Activated B cell treated with CpG ODN at 0.5 μM for 24 hours (primary cell): ENCODE measurements at regions of chr1 and their contacts with region 1.

Region 1: DNA sequence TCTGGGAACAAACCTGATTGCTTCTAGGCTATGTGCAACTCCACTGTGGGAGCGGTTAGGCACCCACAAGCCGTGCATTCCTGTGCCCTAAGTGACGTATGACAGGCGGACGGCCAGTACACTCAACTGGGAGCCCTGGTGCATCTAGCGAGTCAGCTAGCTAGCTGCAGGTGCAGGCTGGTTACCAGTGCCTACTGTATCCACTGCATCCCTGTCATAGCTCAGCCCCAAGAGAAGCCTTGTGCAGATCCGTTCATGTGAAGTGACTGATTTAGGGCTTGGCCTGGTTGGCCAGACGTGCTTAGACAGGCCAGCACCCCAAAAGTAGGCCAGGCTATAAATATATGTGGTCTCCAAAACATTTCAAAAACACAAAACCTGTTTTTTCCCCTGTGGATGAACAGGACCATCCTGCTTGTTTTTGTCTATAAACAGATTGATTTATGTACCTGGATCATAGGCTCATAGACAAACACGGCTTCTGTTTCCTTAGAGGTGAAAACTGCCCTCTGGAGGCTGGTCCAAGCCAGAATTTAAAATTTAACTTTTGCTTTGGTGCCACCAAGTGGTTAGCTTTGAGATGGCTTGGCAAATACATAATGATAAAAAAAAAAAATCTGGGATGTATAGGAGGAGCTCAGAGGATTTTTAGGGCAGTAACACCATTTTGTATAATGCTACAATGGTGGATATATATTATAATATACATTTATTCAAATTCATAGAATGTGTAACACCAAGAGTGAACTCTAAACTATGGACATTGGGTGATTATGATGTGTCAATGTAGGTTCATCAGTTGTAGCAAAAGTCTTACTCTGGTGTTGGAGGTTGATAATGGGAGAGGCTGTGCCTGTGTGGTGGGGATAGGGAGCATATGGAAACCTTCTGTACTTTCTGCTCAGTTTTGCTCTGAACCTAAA is 68.5 kb downstream of the GIPC2 start:
- DNase-seq: no peak
- ATAC-seq: peak; percentile 75
- H3K4me3 Mint-ChIP-seq: no peak overlapping the region
- H3K27ac Mint-ChIP-seq: no peak overlapping the region
- H3K4me1 Mint-ChIP-seq: no peaks in the 10 kb centered on the region
- H3K27me3 Mint-ChIP-seq: peaks cover 1% of the 10 kb centered on the region
- CTCF ChIP-seq: peak; percentile 66

Region 2: GRCh38 chr1:77143529-77144121 is 970.7 kb before region 1 on chr1:
- CTCF ChIA-PET with region 1: no interaction called
- POLR2A ChIA-PET with region 1: no interaction called
- intact Hi-C with region 1: loop called (anchors 1 kb)
- DNase-seq: no peak
- ATAC-seq: no peak
- H3K4me3 Mint-ChIP-seq: no peak overlapping the region
- H3K27ac Mint-ChIP-seq: no peak overlapping the region
- H3K4me1 Mint-ChIP-seq: no peaks in the 10 kb centered on the region
- H3K27me3 Mint-ChIP-seq: no peaks in the 10 kb centered on the region
- CTCF ChIP-seq: no peak

Region 3: DNA sequence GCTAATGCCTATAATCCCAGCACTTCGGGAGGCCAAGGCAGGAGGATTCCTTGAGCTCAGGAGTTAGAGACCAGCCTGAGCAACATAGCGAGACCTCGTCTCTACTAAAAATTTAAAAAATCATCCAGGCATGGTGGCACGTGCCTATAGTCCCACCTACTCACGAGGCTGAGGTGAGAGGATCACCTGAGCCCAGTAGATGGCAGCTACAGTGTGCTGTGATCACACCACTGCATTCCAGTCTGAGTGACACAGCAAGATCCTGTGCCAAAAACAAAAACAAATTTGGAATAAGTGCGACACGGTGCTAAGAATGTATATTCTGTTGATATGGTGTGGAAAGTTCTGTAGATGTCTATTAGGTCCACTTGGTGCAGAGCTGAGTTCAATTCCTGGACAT is 369.7 kb before region 1 on chr1:
- CTCF ChIA-PET with region 1: no interaction called
- POLR2A ChIA-PET with region 1: no interaction called
- intact Hi-C with region 1: loop called (anchors 2 kb)
- DNase-seq: no peak
- ATAC-seq: no peak
- H3K4me3 Mint-ChIP-seq: no peak overlapping the region
- H3K27ac Mint-ChIP-seq: no peak overlapping the region
- H3K4me1 Mint-ChIP-seq: peaks cover 19% of the 10 kb centered on the region
- H3K27me3 Mint-ChIP-seq: no peaks in the 10 kb centered on the region
- CTCF ChIP-seq: no peak

Region 4: DNA sequence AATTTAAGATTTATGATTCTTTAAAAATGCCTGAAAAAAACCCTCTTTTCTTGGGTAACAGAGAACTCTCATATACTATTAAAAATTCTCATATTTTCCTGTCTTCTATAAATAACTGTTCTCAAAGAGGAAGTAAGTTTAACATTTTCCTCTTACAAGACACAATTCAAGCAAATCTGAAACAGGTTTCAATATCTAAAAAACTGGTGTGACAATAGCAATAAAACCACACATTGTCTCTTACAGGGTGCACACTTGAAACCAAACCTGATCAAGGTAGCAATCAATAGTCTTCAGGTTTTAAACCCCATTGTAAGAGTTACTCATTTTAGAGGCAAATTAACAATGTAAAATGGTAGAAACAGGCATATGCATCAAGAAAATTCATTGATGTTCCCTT is 163.4 kb before region 1 on chr1:
- CTCF ChIA-PET with region 1: interaction called, 3 read pairs
- POLR2A ChIA-PET with region 1: no interaction called
- intact Hi-C with region 1: loop called (anchors 5 kb)
- DNase-seq: no peak
- ATAC-seq: peak; percentile 52
- H3K4me3 Mint-ChIP-seq: no peak overlapping the region
- H3K27ac Mint-ChIP-seq: peak overlapping the region; percentile 77
- H3K4me1 Mint-ChIP-seq: peaks cover 40% of the 10 kb centered on the region
- H3K27me3 Mint-ChIP-seq: no peaks in the 10 kb centered on the region
- CTCF ChIP-seq: no peak

Region 5: GRCh38 chr1:78081980-78082860 is 32.1 kb before region 1 on chr1:
- CTCF ChIA-PET with region 1: no interaction called
- POLR2A ChIA-PET with region 1: no interaction called
- intact Hi-C with region 1: no loop called
- DNase-seq: no peak
- ATAC-seq: no peak
- H3K4me3 Mint-ChIP-seq: no peak overlapping the region
- H3K27ac Mint-ChIP-seq: no peak overlapping the region
- H3K4me1 Mint-ChIP-seq: peaks cover 15% of the 10 kb centered on the region
- H3K27me3 Mint-ChIP-seq: no peaks in the 10 kb centered on the region
- CTCF ChIP-seq: no peak

Region 6: DNA sequence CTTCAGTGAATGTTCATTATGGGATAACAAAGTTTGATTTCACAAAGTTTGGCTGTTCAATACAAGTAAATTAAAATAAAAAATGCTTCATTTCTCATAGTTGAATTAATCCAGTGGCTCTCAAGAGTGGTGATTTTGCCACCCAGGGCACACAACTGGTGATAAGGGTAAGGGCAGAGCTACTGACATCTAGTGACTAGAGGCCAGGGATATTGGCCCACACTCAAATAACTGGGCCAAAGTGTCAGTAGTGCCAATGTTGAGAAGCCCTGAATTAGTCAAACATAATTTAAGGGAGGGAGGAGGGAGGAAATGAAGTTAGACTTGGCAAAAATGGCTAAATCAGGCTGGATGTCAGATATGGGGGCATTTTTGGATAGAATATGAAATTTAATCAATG is 1772.8 kb after region 1 on chr1:
- CTCF ChIA-PET with region 1: no interaction called
- POLR2A ChIA-PET with region 1: no interaction called
- intact Hi-C with region 1: no loop called
- DNase-seq: no peak
- ATAC-seq: no peak
- H3K4me3 Mint-ChIP-seq: no peak overlapping the region
- H3K27ac Mint-ChIP-seq: no peak overlapping the region
- H3K4me1 Mint-ChIP-seq: no peaks in the 10 kb centered on the region
- H3K27me3 Mint-ChIP-seq: no peaks in the 10 kb centered on the region
- CTCF ChIP-seq: no peak